ENCODE measurements at regions of chr6 and their contacts with region 1.

Region 1: GRCh38 chr6:147506704-147507114 is 1.8 kb upstream of the SAMD5 start:
- DNase-seq: peak; percentile 82
- ATAC-seq: peak; percentile 64
- H3K4me3 Mint-ChIP-seq: no peak overlapping the region
- H3K27ac Mint-ChIP-seq: no peak overlapping the region
- H3K4me1 Mint-ChIP-seq: peaks cover 12% of the 10 kb centered on the region
- H3K27me3 Mint-ChIP-seq: peaks cover 54% of the 10 kb centered on the region

Region 2: DNA sequence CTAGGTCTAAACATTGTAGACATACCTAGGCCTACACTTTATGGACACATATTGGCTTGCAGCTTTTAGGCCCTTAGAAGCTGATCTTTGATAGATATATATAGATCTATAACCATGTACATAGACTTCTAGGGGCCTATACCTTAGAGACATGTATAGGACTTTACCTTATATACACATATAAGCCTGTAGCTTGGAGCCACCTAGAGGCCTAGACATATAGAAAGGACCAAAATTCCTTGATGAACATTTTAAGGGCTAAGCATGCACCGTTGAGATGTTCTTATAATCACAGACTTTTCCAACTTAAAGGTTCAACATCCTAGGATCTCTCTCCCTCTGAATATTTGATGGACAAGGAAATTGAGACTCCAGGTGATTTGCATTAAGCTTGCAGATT is 464.3 kb after region 1 on chr6:
- CTCF ChIA-PET with region 1: no interaction called
- POLR2A ChIA-PET with region 1: no interaction called
- intact Hi-C with region 1: loop called in 1 of 2 experiments (anchors 1 kb)
- DNase-seq: no peak
- ATAC-seq: no peak
- H3K4me3 Mint-ChIP-seq: no peak overlapping the region
- H3K27ac Mint-ChIP-seq: no peak overlapping the region
- H3K4me1 Mint-ChIP-seq: no peaks in the 10 kb centered on the region
- H3K27me3 Mint-ChIP-seq: no peaks in the 10 kb centered on the region

Region 3: DNA sequence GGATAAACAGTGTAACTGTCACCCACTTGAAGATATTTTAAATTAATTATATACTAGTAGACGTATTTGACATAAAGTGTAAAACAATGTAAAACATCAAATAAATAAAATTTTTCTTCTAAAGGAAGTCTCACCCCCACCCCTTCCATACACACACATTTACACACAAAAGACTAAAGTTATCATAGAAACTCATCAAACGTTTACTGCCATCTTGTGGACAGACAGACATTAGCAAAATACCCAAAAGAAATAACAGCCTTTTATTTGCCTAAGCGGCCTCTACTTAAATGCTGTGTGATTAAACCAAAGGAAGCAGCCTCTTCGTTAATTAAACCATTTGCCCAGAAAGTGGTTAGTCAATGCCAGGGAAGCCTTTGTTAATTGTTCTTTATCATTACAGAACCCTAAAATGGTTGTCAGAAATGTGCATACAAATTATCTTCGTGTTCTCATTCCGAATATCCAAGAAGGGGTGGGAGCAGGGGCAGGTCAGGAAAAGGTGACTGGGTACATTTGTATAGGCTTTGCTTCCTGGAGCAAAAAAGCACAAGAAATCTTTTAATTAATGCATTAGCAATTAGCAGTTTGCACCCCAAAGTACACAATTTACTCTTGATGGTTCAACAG is 659.7 kb after region 1 on chr6:
- CTCF ChIA-PET with region 1: interaction called, 12 read pairs
- POLR2A ChIA-PET with region 1: no interaction called
- intact Hi-C with region 1: loop called (anchors 1 kb)
- DNase-seq: no peak
- ATAC-seq: peak; percentile 33
- H3K4me3 Mint-ChIP-seq: no peak overlapping the region
- H3K27ac Mint-ChIP-seq: no peak overlapping the region
- H3K4me1 Mint-ChIP-seq: peaks cover 2% of the 10 kb centered on the region
- H3K27me3 Mint-ChIP-seq: peaks cover 5% of the 10 kb centered on the region

Region 4: GRCh38 chr6:148240461-148240840 is 733.7 kb after region 1 on chr6:
- CTCF ChIA-PET with region 1: no interaction called
- POLR2A ChIA-PET with region 1: no interaction called
- intact Hi-C with region 1: loop called in 1 of 2 experiments (anchors 10 kb)
- DNase-seq: no peak
- ATAC-seq: no peak
- H3K4me3 Mint-ChIP-seq: no peak overlapping the region
- H3K27ac Mint-ChIP-seq: no peak overlapping the region
- H3K4me1 Mint-ChIP-seq: no peaks in the 10 kb centered on the region
- H3K27me3 Mint-ChIP-seq: peaks cover 31% of the 10 kb centered on the region